GM10248 (cell line): ENCODE measurements at regions of chr1 and their contacts with region 1.

Region 1: GRCh38 chr1:28112388-28113241 is 24.2 kb upstream of the EYA3 start:
- DNase-seq: no peak
- CTCF ChIP-seq: no peak

Region 2: GRCh38 chr1:28099050-28099769 is 13.4 kb before region 1 on chr1:
- CTCF ChIA-PET with region 1: interaction called, 18 read pairs
- POLR2A ChIA-PET with region 1: no interaction called
- DNase-seq: no peak
- CTCF ChIP-seq: no peak